Calu3 (cell line): ENCODE measurements at regions of chr9 and their contacts with region 1.

Region 1: GRCh38 chr9:107548048-107548800 is 58.7 kb upstream of the KLF4 start:
- DNase-seq: peak; percentile 34
- H3K4me3 Mint-ChIP-seq: peak overlapping the region; percentile 13
- H3K27ac Mint-ChIP-seq: peak overlapping the region; percentile 97
- H3K4me1 Mint-ChIP-seq: peaks cover 38% of the 10 kb centered on the region
- H3K27me3 Mint-ChIP-seq: no peaks in the 10 kb centered on the region
- CTCF ChIP-seq: no peak

Region 2: DNA sequence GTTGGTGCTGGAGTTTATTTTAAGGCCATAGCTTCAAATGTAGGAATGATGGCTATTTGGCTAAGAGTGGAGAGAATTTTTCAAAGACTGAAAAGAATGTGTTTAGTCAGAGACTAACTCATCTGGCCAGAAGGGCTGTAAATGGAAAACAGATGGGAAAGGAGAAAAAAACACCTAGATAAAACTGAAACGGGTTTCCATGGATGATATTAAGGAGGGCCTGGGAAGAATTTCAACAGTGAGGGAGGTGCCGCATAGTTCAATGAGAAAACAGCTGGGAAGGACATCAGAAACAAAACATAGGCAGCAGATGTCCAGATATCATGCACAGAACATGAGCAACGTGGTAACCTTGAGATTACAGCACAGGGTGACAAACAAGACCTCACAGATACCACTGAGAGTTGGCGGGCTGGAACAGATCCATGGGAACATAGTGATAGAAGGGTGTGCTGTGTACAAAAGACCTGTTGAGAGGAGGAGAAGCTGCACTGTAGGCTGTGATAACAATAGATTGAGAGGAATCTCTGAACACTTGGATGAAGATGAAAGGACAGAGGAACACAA is 296.4 kb before region 1 on chr9:
- CTCF ChIA-PET with region 1: no interaction called
- intact Hi-C with region 1: no loop called
- DNase-seq: no peak
- H3K4me3 Mint-ChIP-seq: no peak overlapping the region
- H3K27ac Mint-ChIP-seq: no peak overlapping the region
- H3K4me1 Mint-ChIP-seq: peaks cover 27% of the 10 kb centered on the region
- H3K27me3 Mint-ChIP-seq: no peaks in the 10 kb centered on the region
- CTCF ChIP-seq: no peak

Region 3: DNA sequence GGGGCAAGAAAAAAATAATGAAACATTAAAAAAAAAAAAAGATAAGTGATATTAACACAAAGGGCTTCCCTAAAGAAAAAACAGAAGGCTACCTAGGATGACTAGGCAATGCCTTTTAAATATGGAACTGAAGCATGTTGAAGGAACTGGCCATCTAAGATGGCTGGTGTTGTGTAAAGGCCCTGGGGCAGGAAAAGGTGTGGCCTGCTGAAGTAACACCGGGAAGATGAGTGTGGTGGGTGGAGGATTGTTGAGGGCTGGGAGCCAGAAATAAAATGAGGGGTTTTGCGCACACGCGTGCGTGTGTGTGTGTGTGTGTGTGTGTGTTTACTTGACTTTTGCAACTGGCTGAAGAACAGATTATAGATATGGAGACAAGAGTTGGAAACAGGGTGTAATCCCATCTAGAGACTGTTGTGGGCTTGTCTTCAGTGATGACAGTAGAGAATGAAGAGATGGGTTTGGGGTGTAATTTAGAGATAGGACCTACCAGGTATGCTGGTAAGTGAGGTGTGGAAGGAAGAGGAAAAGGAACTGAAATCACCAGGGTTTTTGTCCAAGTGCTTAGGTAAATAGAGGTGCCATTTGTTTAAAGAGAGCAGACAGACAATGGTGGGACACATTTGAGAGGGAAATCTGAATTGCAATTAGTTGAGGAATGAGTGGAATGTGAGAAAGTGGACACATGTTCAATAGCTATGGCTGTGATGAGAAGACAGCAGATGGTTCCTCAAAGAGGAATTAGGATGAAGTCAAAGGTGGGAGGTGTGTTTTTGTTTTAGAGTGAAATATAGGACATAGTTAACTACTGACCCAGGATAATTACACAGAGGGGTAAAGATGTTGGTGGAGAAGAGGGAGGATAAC is 231.2 kb before region 1 on chr9:
- CTCF ChIA-PET with region 1: no interaction called
- intact Hi-C with region 1: no loop called
- DNase-seq: no peak
- H3K4me3 Mint-ChIP-seq: no peak overlapping the region
- H3K27ac Mint-ChIP-seq: peak overlapping the region; percentile 27
- H3K4me1 Mint-ChIP-seq: peaks cover 21% of the 10 kb centered on the region
- H3K27me3 Mint-ChIP-seq: no peaks in the 10 kb centered on the region
- CTCF ChIP-seq: no peak

Region 4: GRCh38 chr9:107489687-107490605 is 58.3 kb before region 1 on chr9 and contains the start of gene KLF4:
- CTCF ChIA-PET with region 1: no interaction called
- intact Hi-C with region 1: loop called (anchors 5 kb)
- DNase-seq: peak; percentile 79
- H3K4me3 Mint-ChIP-seq: peak within 1 kb of the TSS; percentile 84
- H3K27ac Mint-ChIP-seq: peak within 1 kb of the TSS; percentile 94
- H3K4me1 Mint-ChIP-seq: peaks cover 44% of the 10 kb centered on the region
- H3K27me3 Mint-ChIP-seq: no peaks in the 10 kb centered on the region
- CTCF ChIP-seq: no peak
- total RNA-seq, gene KLF4: 19.9 and 23.0 TPM in 2 replicates

Region 5: GRCh38 chr9:107635101-107635802 is 87.0 kb after region 1 on chr9:
- CTCF ChIA-PET with region 1: no interaction called
- intact Hi-C with region 1: loop called (anchors 2 kb)
- DNase-seq: no peak
- H3K4me3 Mint-ChIP-seq: no peak overlapping the region
- H3K27ac Mint-ChIP-seq: no peak overlapping the region
- H3K4me1 Mint-ChIP-seq: no peaks in the 10 kb centered on the region
- H3K27me3 Mint-ChIP-seq: no peaks in the 10 kb centered on the region
- CTCF ChIP-seq: no peak

Region 6: DNA sequence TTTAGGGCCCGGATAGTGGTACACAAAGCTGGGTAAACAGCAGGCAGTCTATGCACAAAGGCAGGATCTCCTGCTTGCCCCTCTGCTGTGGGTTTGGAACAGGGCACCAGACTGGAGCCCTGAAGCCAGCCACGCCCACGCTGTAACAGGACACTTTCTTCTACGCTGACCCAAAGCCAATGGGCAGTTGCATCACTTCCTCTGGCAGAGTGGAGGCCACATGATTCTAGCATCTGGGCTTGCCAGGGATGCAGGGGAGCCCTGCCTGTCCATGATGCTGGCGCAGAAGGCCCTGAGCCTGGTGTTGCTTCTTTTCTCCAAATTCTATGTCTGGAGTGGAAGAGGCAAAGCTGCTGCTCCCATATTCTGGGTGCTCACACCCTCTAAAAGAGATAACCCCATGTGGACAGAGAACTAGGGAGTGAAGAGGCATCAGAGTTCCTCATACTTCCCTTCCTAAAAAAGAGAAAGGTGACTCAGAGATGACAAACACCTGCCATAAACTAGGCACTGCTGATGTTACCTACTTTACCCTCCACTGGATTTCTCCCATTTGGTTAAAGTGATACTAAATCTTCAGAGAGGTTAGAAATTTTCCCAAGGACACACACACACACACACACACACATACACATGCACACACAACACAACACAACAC is 201.7 kb after region 1 on chr9:
- CTCF ChIA-PET with region 1: no interaction called
- intact Hi-C with region 1: loop called (anchors 5 kb)
- DNase-seq: peak; percentile 75
- H3K4me3 Mint-ChIP-seq: no peak overlapping the region
- H3K27ac Mint-ChIP-seq: peak overlapping the region; percentile 97
- H3K4me1 Mint-ChIP-seq: peaks cover 54% of the 10 kb centered on the region
- H3K27me3 Mint-ChIP-seq: no peaks in the 10 kb centered on the region
- CTCF ChIP-seq: no peak

Region 7: GRCh38 chr9:108150736-108151586 is 602.7 kb after region 1 on chr9:
- CTCF ChIA-PET with region 1: no interaction called
- intact Hi-C with region 1: no loop called
- DNase-seq: no peak
- H3K4me3 Mint-ChIP-seq: no peak overlapping the region
- H3K27ac Mint-ChIP-seq: no peak overlapping the region
- H3K4me1 Mint-ChIP-seq: no peaks in the 10 kb centered on the region
- H3K27me3 Mint-ChIP-seq: peaks cover 23% of the 10 kb centered on the region
- CTCF ChIP-seq: no peak